ENCODE measurements at regions of chr15 and their contacts with region 1.

Region 1: DNA sequence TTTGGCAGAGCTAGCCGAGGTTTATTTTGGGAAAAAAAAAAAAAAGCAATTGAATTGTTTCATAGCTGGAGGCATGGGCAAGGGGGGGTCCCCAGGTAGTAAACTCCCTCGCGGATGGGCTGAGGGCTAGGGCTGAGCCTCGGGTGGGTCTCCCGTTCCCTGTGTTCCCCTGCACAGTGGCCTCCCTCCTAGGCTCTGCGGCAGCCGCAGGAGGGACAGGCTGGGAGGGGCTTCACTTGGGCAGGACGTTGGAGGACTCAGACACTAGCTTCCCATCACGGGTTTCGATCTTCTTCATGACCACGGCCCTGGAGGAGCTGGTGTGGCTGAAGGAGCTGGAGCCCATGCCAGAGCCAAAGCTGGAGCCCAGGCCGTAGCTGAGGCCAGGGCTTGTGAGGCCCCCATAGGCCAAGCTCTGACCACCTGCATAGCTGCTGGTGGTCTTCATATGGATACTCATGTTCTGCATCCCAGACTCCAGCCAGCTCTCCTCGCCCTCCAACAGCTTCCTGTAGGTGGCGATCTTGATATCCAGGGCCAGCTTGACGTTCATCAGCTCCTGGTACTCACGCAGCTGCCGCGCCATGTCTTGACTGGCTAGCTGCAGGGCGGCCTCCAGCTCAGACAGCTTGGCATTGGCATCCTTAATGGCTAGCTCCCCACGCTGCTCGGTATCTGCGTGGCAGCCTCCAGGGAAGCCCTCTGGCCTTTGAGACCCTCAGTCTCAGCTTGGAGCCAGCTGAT is 64.0 kb upstream of the CDAN1 start:
- DNase-seq: no peak
- H3K27ac ChIP-seq: no peak overlapping the region
- CTCF ChIP-seq: no peak

Region 2: DNA sequence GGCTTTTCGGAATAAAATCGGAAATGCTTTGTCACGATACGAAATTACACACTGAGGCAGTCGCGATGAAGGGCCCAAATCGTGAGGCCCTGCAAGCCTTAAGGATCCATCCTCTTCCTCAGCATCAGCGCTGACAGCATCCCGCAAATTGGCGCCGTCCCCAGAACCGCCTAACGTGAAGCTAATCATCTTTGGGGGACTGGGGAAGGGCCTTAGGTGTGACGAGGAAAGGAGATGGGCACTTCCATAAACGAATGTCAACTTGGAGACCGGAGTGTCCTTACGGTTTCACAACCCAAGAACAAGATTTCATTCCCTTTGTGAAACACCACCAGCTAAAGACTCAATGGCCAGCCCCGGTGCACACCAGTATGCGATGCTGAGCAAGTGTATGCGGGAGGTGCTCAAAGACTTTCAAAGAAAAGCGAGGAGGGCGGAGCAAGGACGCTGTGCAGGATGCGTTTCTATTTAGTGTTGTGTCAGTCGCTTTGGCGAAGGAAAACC is 120.4 kb after region 1 on chr15:
- CTCF ChIA-PET with region 1: interaction called, 16 read pairs
- POLR2A ChIA-PET with region 1: interaction called, 4 read pairs
- DNase-seq: no peak
- H3K27ac ChIP-seq: peak overlapping the region; percentile 85
- CTCF ChIP-seq: no peak